OCI-LY7 (cell line): ENCODE measurements at regions of chr13 and their contacts with region 1.

Region 1: DNA sequence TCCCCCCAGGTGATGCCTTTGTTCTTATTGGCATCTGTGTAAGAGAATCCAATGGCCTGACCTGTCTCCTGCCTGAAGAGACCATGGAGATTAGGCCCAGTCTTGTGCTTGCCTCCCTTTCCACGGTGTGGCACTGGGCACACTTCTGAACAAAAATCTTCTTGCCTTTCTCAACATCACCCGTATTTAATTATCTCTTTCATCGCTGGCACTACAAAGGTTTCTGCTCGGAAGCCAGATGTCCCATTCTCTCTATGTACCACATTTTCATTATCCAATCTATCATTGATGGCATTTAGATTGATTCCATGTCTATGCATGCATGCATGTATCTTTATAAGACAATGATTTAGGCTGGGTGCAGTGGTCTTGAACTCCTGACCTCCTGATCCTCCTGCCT is 74.3 kb downstream of the SLC25A15 start:
- DNase-seq: no peak
- H3K4me3 ChIP-seq: no peak overlapping the region
- H3K27ac ChIP-seq: no peak overlapping the region
- H3K4me1 ChIP-seq: no peaks in the 10 kb centered on the region
- CTCF ChIP-seq: no peak

Region 2: GRCh38 chr13:40819797-40820315 is 43.9 kb before region 1 on chr13:
- CTCF ChIA-PET with region 1: no interaction called
- POLR2A ChIA-PET with region 1: no interaction called
- intact Hi-C with region 1: loop called (anchors 5 kb)
- DNase-seq: no peak
- H3K4me3 ChIP-seq: no peak overlapping the region
- H3K27ac ChIP-seq: no peak overlapping the region
- H3K4me1 ChIP-seq: no peaks in the 10 kb centered on the region
- CTCF ChIP-seq: no peak

Region 3: DNA sequence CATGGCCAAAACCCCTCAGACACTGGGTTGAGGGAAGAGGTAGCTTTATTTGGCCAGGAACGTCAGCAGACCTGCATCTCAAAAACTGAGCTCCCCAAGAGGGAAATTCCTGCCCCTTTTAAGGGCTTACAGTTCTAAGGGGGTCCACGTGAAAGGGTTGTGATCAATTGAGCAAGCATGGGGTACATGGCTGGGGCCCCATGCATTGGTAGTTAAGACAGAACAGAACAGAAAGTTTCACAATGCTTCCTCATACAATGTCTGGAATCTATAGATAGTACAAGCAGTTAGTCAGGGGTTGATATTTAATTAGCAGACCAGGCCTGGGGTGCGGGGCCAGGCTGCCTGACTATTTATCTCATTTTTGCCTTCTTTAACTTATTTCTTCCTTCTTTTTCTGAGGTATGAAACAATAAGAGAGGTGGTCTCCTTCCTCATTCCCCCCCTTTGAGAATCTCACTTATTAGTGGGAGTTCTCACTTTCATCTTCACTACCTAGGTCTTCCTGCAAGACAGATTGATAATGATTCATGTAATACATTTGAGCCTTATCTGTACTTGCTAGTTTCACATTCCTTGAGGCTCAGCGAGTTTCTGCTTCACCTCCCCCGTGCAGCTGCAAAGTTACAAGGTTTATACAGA is 10.5 kb after region 1 on chr13:
- CTCF ChIA-PET with region 1: no interaction called
- POLR2A ChIA-PET with region 1: no interaction called
- intact Hi-C with region 1: no loop called
- DNase-seq: peak; percentile 13
- H3K4me3 ChIP-seq: no peak overlapping the region
- H3K27ac ChIP-seq: no peak overlapping the region
- H3K4me1 ChIP-seq: no peaks in the 10 kb centered on the region
- CTCF ChIP-seq: no peak